Right ventricle myocardium superior (tissue), 1 donor: ENCODE measurements at regions of chr1 and their contacts with region 1.

Region 1: GRCh38 chr1:43227143-43227764 is 42.5 kb upstream of the TMEM125 start:
- DNase-seq: peak; percentile 87
- ATAC-seq: peak; percentile 88

Region 2: GRCh38 chr1:43389326-43390313 is 162.4 kb after region 1 on chr1 and contains the starts of genes MED8 and SZT2:
- intact Hi-C with region 1: no loop called
- DNase-seq: peak; percentile 98
- ATAC-seq: peak; percentile 100
- total RNA-seq, gene MED8: 16.5 TPM
- total RNA-seq, gene SZT2: 26.8 TPM

Region 3: DNA sequence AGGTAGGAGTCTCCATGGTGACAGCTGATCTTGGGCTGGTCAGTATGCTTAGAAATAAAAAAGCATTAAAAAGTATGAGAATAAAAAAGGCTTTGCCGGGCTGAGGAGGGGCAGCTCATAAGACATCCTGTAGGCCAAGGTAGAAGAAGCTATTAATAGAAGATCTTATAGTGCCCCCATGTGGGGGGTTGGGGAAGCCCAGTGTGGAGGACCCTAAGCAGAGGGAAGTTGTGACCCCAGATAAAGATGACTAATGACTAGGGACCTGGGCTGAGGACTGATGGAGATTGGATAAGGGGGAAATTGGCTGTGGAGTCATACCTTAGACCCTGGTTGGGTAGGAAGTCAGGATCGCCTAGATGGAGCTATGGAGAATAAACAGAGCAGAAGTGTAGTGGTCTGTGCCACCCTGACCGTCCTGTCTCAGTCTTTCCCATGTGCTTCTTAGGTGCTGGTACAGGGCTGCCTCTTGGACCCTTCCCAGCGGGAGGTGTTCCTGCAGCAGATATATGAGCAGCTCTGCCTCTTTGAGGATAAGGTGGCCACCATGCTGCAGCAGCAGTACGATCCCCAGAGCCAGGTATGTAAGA is 187.5 kb after region 1 on chr1:
- intact Hi-C with region 1: loop called (anchors 5 kb)
- DNase-seq: no peak
- ATAC-seq: peak; percentile 72